Left cardiac atrium (tissue), 4 donors: ENCODE measurements at regions of chr1 and their contacts with region 1.

Region 1: DNA sequence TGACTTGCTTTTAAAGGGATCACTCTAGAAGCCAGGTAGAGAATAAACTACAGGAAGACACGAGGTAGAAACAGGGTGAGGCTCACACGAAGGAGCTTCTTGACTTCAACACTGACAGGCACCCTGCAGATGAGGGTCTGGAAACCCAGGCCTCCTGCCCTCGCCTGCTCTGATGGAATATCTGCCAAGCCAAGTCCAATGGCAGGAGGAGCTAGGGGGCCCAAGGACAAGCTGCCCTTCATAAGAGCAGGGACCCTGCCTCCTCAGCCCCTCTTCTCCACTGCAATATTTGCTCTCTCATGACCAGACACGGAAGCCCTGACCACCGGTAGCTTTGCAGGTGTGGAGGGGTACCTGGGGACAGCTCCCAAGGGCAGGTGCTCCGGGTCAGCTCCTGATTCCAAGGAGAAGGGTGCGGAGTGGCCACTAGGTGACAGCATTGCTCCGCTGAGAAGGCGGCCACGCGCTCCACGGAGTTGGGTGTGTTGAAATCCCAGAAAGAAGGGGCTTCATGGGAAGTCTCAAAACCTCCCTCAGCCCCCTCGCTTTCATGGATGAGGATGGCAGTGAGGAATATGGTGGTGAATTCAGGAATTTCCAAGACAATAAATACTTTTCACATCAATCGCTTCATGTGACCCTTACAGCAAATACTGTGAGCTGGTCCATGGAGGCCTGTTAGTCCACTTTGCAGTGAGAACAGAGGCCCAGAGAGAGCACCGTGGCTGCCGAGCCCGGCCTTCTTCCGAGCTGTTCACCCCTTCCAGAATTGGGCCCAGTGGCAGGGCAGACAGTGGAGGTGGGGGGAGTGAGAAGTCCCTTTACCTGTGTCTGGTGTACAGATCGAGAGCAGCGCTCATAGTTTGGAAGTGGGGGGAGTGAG is 33.2 kb upstream of the PAX7 start:
- DNase-seq: peak; percentile 59
- ATAC-seq: peak; percentile 81

Region 2: DNA sequence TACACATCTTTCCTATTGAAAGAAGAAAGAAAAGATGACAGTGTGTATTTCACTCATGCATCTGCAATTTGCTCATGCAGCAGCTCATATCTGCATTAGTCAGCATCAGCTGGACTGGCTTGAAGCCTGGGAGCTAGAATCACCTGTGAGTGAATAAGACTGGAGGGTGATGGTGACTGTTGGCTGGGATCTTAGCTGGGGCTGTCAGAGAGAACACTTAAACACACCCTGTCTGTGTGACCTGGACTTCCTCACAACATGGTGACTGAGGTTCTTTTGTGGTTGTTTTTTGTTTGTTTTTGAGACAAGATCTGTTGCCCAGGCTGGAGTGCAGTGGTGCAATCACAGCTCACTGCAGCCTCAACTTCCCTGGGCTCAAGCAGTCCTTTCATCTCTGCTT is 91.7 kb before region 1 on chr1:
- intact Hi-C with region 1: no loop called
- DNase-seq: no peak
- ATAC-seq: no peak

Region 3: GRCh38 chr1:18820791-18821641 is 223.6 kb after region 1 on chr1:
- intact Hi-C with region 1: loop called (anchors 1 to 5 kb)
- DNase-seq: peak; percentile 81
- ATAC-seq: peak; percentile 86 to 87

Region 4: GRCh38 chr1:18875107-18875795 is 277.9 kb after region 1 on chr1:
- intact Hi-C with region 1: loop called in 1 of 2 experiments (anchors 2 kb)
- DNase-seq: peak; percentile 82
- ATAC-seq: peak; percentile 74 to 79